AG04449 (cell line): ENCODE measurements at regions of chr6 and their contacts with region 1.

Region 1: GRCh38 chr6:1424306-1424928 is 35.0 kb downstream of the FOXF2 start:
- DNase-seq: no peak
- H3K4me3 ChIP-seq: no peak overlapping the region
- CTCF ChIP-seq: peak; percentile 57

Region 2: GRCh38 chr6:1396952-1397868 is 27.2 kb before region 1 on chr6:
- CTCF ChIA-PET with region 1: interaction called, 14 read pairs
- POLR2A ChIA-PET with region 1: no interaction called
- DNase-seq: no peak
- H3K4me3 ChIP-seq: no peak overlapping the region
- CTCF ChIP-seq: peak; percentile 92

Region 3: GRCh38 chr6:1412901-1413300 is 11.5 kb before region 1 on chr6:
- CTCF ChIA-PET with region 1: interaction called, 10 read pairs
- POLR2A ChIA-PET with region 1: no interaction called
- DNase-seq: no peak
- H3K4me3 ChIP-seq: no peak overlapping the region
- CTCF ChIP-seq: no peak

Region 4: DNA sequence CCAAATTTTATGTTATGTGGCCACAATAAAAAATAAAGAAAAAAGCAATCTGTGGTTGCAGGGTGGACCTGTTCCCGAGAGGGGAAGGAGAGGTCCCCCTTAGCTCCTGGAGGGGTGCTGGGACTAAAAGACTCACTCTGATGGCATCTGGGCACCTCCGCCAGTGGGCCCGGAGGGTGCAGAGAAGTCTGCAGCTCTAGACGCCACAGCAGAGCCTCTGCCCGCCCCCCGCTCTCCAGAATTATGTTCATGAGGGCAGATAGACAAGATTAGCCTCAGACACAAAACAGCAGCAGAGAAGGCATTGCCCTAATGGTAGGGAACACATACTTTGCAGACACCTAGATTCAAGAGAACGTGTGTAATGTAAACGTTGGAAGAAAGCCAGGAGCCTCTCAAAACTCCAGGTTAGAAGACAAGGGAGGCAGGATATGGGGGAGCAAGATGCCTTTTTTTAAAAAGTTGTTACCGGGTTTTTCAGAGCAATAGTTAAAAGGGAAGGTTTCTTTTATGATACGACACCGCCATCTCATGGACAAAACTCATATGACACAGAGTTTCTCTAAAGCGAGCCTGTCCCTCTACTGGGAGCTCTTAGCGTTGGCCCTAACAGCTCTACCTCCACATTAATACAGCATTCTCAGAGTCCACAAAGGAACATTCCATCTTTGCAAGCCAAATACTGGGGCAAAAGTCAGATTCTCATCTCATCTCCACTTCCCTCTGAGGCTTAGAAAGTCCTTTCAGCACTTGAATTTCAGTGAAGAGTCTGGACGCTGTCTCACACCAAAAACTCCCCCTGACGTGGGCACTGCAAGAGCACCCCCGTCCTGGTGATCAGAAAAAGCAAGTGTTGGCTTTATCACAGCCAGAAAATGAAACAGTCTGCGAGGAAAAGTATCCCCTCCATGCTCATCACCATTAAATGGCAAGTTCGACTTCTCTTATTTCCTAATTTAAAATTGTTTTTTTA is 12.2 kb after region 1 on chr6:
- CTCF ChIA-PET with region 1: interaction called, 27 read pairs
- POLR2A ChIA-PET with region 1: no interaction called
- DNase-seq: peak; percentile 5
- H3K4me3 ChIP-seq: no peak overlapping the region
- CTCF ChIP-seq: peak; percentile 69

Region 5: GRCh38 chr6:1609648-1610496 is 185.5 kb after region 1 on chr6 and contains the start of gene FOXC1:
- CTCF ChIA-PET with region 1: no interaction called
- POLR2A ChIA-PET with region 1: no interaction called
- DNase-seq: peak; percentile 57
- H3K4me3 ChIP-seq: peak within 1 kb of the TSS; percentile 72
- CTCF ChIP-seq: no peak